ENCODE measurements at regions of chr20 and their contacts with region 1.

Region 1: GRCh38 chr20:62953839-62954703 is 1.6 kb downstream of the SLC17A9 start:
- DNase-seq: peak; percentile 76
- ATAC-seq: peak; percentile 87
- H3K4me3 Mint-ChIP-seq: peak overlapping the region; percentile 86
- H3K27ac Mint-ChIP-seq: peak overlapping the region; percentile 96
- H3K4me1 Mint-ChIP-seq: peaks cover 38% of the 10 kb centered on the region
- H3K27me3 Mint-ChIP-seq: no peaks in the 10 kb centered on the region
- CTCF ChIP-seq: no peak

Region 2: DNA sequence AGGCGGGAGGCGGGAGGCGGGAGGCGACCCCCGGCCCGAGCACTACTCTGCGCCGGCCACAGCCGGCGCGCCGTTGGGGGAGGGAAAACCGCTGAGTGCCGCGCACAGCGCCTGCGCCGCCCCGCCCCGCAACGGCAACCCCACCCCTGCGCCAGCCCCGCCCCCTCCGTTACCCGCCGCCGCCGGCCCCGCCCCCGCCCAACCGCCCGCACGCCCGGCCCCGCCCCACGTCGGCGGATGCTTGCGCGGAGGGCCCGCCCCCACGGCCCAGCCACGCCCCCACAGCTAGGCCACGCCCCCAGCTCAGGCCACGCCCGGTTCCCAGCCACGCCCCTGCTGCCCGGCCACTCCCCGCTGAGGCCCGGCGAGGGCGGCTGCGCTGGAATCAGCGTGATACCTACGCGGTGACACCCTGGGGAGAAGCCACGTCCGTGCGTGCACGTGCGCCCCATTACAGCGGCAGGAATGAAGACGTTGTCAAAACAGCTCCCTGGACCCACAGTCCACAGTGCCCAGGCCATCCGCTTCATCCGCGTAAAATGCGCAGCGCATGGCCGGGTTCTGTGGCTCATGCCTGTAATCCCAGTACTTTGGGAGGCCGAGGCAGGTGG is 92.2 kb before region 1 on chr20 and contains the start of gene TCFL5:
- CTCF ChIA-PET with region 1: no interaction called
- POLR2A ChIA-PET with region 1: interaction called, 3 read pairs
- intact Hi-C with region 1: loop called (anchors 1 kb)
- DNase-seq: peak; percentile 99
- ATAC-seq: peak; percentile 90
- H3K4me3 Mint-ChIP-seq: peak within 1 kb of the TSS; percentile 81
- H3K27ac Mint-ChIP-seq: peak within 1 kb of the TSS; percentile 52
- H3K4me1 Mint-ChIP-seq: peaks cover 41% of the 10 kb centered on the region
- H3K27me3 Mint-ChIP-seq: no peaks in the 10 kb centered on the region
- CTCF ChIP-seq: no peak
- total RNA-seq, gene TCFL5: 54.5 and 55.6 TPM in 2 replicates

Region 3: GRCh38 chr20:62921119-62921687 is 32.9 kb before region 1 on chr20:
- CTCF ChIA-PET with region 1: interaction called, 3 read pairs
- POLR2A ChIA-PET with region 1: interaction called, 44 read pairs
- intact Hi-C with region 1: loop called (anchors 1 kb)
- DNase-seq: no peak
- ATAC-seq: peak; percentile 53
- H3K4me3 Mint-ChIP-seq: peak overlapping the region; percentile 69
- H3K27ac Mint-ChIP-seq: peak overlapping the region; percentile 65
- H3K4me1 Mint-ChIP-seq: peaks cover 87% of the 10 kb centered on the region
- H3K27me3 Mint-ChIP-seq: no peaks in the 10 kb centered on the region
- CTCF ChIP-seq: no peak

Region 4: DNA sequence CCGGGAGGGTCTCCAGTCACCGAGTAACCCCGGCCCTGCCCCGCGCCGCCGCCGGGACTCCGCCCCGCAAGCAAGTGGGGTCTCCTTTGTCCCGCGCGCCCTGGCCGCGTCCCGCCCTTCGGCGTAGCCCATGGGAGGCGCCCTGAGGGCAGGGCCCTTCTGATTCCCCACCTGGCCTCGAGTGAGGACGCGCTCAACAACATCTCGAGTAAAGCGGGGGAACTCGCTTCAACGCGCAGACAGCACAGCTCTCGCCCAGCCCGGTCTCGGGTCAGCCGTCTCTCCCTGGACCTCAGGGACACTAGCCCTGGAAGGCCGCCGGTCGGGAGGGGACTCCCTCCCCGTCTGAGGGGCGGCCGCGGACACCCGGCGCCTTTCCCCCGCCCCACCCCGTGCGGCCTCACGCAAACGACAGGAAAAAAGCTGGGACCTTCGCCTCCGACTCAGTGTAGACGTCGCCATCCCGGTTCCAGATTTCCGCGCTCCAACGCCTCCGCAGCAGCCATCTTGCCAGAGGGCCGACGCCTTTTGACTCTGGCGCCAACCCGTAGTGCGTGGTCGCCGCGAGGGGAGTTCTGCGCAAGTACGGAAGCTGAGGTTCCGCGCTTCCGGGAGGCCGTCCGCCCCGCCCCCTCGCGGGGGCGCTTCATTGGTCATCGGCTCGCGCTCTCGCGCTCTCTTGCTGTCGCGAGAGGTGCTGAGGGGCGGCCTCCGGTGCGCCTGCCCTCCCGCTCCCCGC is 16.5 kb before region 1 on chr20:
- CTCF ChIA-PET with region 1: interaction called, 5 read pairs
- POLR2A ChIA-PET with region 1: interaction called, 59 read pairs
- intact Hi-C with region 1: loop called (anchors 1 kb)
- DNase-seq: peak; percentile 97
- ATAC-seq: peak; percentile 88
- H3K4me3 Mint-ChIP-seq: peak overlapping the region; percentile 94
- H3K27ac Mint-ChIP-seq: peak overlapping the region; percentile 94
- H3K4me1 Mint-ChIP-seq: peaks cover 42% of the 10 kb centered on the region
- H3K27me3 Mint-ChIP-seq: no peaks in the 10 kb centered on the region
- CTCF ChIP-seq: no peak

Region 5: GRCh38 chr20:62977613-62978560 is 23.8 kb after region 1 on chr20:
- CTCF ChIA-PET with region 1: no interaction called
- POLR2A ChIA-PET with region 1: interaction called, 23 read pairs
- intact Hi-C with region 1: loop called (anchors 1 kb)
- DNase-seq: peak; percentile 84
- ATAC-seq: peak; percentile 81
- H3K4me3 Mint-ChIP-seq: peak overlapping the region; percentile 67
- H3K27ac Mint-ChIP-seq: peak overlapping the region; percentile 70
- H3K4me1 Mint-ChIP-seq: peaks cover 51% of the 10 kb centered on the region
- H3K27me3 Mint-ChIP-seq: peaks cover 23% of the 10 kb centered on the region
- CTCF ChIP-seq: no peak